Transverse colon (tissue), 4 donors: ENCODE measurements at regions of chr10 and their contacts with region 1.

Region 1: GRCh38 chr10:67772894-67773511 is 65.0 kb downstream of the DNAJC12 start:
- DNase-seq: no peak
- H3K4me3 ChIP-seq: no peak overlapping the region
- H3K27ac ChIP-seq: no peak overlapping the region
- H3K4me1 ChIP-seq: no peaks in the 10 kb centered on the region
- H3K27me3 ChIP-seq: no peaks in the 10 kb centered on the region
- CTCF ChIP-seq: no peak
- EP300 ChIP-seq: no peak
- POLR2A ChIP-seq: no peak

Region 2: GRCh38 chr10:67697724-67698131 is 75.3 kb before region 1 on chr10:
- in situ Hi-C with region 1: loop called in 1 of 4 experiments (anchors 5 kb)
- intact Hi-C with region 1: no loop called
- DNase-seq: no peak
- H3K4me3 ChIP-seq: no peak overlapping the region
- H3K27ac ChIP-seq: no peak overlapping the region
- H3K4me1 ChIP-seq: peaks cover 0 to 16% (median 2%) of the 10 kb centered on the region in 4 donors
- H3K27me3 ChIP-seq: peaks cover 9% of the 10 kb centered on the region
- CTCF ChIP-seq: peak; percentile 55 to 77 (median 67)
- EP300 ChIP-seq: no peak
- POLR2A ChIP-seq: no peak

Region 3: GRCh38 chr10:67705921-67706320 is 67.1 kb before region 1 on chr10:
- in situ Hi-C with region 1: no loop called
- intact Hi-C with region 1: loop called (anchors 5 kb)
- DNase-seq: no peak
- H3K4me3 ChIP-seq: no peak overlapping the region
- H3K27ac ChIP-seq: no peak overlapping the region
- H3K4me1 ChIP-seq: no peaks in the 10 kb centered on the region
- H3K27me3 ChIP-seq: peaks cover 3% of the 10 kb centered on the region
- CTCF ChIP-seq: no peak
- EP300 ChIP-seq: no peak
- POLR2A ChIP-seq: no peak

Region 4: GRCh38 chr10:67955614-67956013 is 182.6 kb after region 1 on chr10:
- in situ Hi-C with region 1: no loop called
- intact Hi-C with region 1: no loop called
- DNase-seq: no peak
- H3K4me3 ChIP-seq: no peak overlapping the region
- H3K27ac ChIP-seq: no peak overlapping the region
- H3K4me1 ChIP-seq: no peaks in the 10 kb centered on the region
- H3K27me3 ChIP-seq: no peaks in the 10 kb centered on the region
- CTCF ChIP-seq: no peak
- EP300 ChIP-seq: no peak
- POLR2A ChIP-seq: no peak

Region 5: DNA sequence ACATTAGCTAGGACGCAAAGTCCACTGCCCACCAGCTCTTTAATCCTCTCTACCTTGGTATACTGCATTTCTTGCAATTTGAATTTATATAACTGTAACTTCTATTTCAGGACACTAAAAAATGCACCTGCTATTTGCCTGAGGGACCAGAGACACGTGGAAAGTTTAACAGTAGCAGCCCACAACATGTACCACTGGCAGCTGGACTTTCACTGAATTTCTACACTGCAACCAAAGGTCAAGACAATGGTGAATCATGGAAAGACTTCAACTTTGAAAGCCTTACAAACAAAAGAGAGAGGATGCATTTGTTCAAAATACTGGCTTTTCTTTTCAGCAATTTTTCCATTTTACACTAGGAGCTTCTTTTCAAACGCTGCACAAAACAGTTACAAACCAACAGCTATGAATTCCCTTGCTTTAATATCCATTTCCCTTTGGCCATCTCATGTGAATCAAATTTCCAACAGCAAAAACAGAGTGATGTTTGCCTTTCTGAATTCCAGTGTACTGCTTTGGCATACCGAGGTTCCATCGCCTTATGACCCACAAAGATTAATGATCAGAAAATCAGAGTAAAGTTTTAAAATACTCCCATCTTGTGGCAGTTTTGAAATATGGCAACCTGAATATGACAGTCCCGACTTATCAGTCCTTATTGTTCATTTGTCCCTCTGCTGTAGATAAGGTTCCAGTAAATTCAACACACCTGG is 528.9 kb after region 1 on chr10:
- in situ Hi-C with region 1: no loop called
- intact Hi-C with region 1: no loop called
- DNase-seq: no peak
- H3K4me3 ChIP-seq: no peak overlapping the region
- H3K27ac ChIP-seq: peak overlapping the region in 2 of 4 donors; percentile 3 to 44
- H3K4me1 ChIP-seq: peaks cover 0 to 41% (median 11%) of the 10 kb centered on the region in 4 donors
- H3K27me3 ChIP-seq: no peaks in the 10 kb centered on the region
- CTCF ChIP-seq: peak; percentile 44 to 69 (median 51)
- EP300 ChIP-seq: no peak
- POLR2A ChIP-seq: no peak